Activated T-helper 2 cell treated with anti-CD3 and anti-CD28 coated beads, Interferon-gamma antibody, Interleukin-2, Interleukin-4, amounts not matched to agents 10 μg/mL and 5 μg/mL and 100 μg/mL, durations not matched to agents 14 hours and 24 hours and 36 hours (primary cell): ENCODE measurements at regions of chr12 and their contacts with region 1.

Region 1: DNA sequence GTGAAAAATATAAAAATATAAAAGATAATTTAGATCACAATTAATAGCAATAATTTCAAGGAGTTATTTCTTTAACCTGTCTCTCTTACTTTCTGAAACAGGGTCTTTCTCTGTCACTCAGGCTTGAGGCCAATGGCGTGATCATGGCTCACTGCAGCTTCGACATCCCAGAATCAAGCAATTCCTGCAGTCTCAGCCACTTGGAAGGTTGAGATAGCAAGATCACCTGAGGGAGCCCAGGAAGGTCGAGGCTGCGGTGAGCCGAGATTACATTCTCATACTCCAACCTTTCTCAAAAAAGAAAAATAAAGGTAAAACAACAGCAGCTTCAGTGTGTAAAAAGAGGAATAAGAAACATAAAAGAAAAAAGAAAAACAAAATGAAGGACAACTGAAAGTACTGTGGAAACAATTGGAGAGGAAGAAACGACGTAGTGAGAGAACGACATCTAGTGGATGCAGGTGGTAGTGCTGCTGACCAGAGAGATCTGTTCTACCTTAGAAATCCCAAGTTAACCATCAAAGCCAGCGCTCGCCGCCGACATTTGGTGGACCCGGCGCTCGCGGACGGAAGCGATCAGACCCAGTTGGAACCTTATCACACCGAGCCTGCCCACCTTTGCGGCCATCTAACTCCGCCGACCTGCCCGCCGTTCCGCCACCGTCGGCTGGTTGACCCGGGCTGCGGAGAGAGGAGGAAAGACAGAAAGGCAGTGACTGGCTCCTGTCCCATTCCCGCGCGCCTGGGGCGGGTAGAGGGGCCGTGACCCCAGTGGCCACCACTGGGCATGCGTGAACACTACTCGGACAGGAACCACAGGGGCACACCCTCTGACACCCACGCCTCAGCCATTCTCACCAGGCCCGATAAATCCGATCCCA is 196.1 kb downstream of the ALG10 start:
- DNase-seq: peak; percentile 56
- H3K4me3 Mint-ChIP-seq: peak overlapping the region; percentile 80
- H3K27ac Mint-ChIP-seq: no peak overlapping the region
- H3K4me1 Mint-ChIP-seq: peaks cover 1% of the 10 kb centered on the region
- H3K27me3 Mint-ChIP-seq: peaks cover 1% of the 10 kb centered on the region

Region 2: DNA sequence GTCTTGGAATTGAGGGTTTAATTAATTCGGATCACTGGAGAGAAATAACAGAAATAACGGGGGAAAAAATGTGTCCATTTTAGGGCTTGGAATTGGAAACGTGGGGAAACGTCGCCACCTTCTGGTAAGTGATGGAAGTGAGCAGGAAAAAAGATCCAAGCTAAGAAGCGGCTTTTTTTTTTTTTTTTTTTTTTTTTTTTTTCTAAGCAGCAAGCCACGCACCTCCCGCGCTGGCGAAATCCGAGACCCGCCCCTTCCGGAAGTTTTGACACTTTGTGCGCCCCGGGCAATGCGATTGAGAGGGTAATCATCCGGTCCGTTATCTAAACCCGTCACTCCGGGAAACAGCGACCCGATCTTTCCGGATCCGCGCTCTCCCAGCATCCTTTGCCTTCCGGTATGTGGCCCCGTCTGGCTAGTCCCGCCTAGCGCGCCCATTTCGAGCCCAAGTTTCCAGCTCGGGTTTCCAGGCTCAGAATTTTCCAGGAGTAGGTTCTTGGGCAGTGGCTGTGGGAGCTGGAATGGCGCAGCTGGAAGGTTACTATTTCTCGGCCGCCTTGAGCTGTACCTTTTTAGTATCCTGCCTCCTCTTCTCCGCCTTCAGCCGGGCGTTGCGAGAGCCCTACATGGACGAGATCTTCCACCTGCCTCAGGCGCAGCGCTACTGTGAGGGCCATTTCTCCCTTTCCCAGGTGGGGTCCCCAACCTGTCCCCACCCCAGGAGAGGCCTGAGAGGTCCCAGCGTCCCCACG is 196.2 kb before region 1 on chr12 and contains the start of gene ALG10:
- intact Hi-C with region 1: loop called (anchors 2 kb)
- DNase-seq: peak; percentile 95
- H3K4me3 Mint-ChIP-seq: peak within 1 kb of the TSS; percentile 97
- H3K27ac Mint-ChIP-seq: peak within 1 kb of the TSS; percentile 95
- H3K4me1 Mint-ChIP-seq: peaks cover 25% of the 10 kb centered on the region
- H3K27me3 Mint-ChIP-seq: no peaks in the 10 kb centered on the region
- total RNA-seq, gene ALG10: 18.7 and 20.4 TPM in 2 replicates

Region 3: GRCh38 chr12:34033628-34034282 is 184.7 kb before region 1 on chr12:
- intact Hi-C with region 1: loop called (anchors 1 kb)
- DNase-seq: no peak
- H3K4me3 Mint-ChIP-seq: no peak overlapping the region
- H3K27ac Mint-ChIP-seq: no peak overlapping the region
- H3K4me1 Mint-ChIP-seq: peaks cover 4% of the 10 kb centered on the region
- H3K27me3 Mint-ChIP-seq: no peaks in the 10 kb centered on the region

Region 4: GRCh38 chr12:34126239-34126641 is 92.2 kb before region 1 on chr12:
- intact Hi-C with region 1: loop called (anchors 1 kb)
- DNase-seq: no peak
- H3K4me3 Mint-ChIP-seq: peak overlapping the region; percentile 44
- H3K27ac Mint-ChIP-seq: no peak overlapping the region
- H3K4me1 Mint-ChIP-seq: peaks cover 6% of the 10 kb centered on the region
- H3K27me3 Mint-ChIP-seq: peaks cover 2% of the 10 kb centered on the region